Prostate gland (tissue), 2 donors: ENCODE measurements at regions of chr17 and their contacts with region 1.

Region 1: DNA sequence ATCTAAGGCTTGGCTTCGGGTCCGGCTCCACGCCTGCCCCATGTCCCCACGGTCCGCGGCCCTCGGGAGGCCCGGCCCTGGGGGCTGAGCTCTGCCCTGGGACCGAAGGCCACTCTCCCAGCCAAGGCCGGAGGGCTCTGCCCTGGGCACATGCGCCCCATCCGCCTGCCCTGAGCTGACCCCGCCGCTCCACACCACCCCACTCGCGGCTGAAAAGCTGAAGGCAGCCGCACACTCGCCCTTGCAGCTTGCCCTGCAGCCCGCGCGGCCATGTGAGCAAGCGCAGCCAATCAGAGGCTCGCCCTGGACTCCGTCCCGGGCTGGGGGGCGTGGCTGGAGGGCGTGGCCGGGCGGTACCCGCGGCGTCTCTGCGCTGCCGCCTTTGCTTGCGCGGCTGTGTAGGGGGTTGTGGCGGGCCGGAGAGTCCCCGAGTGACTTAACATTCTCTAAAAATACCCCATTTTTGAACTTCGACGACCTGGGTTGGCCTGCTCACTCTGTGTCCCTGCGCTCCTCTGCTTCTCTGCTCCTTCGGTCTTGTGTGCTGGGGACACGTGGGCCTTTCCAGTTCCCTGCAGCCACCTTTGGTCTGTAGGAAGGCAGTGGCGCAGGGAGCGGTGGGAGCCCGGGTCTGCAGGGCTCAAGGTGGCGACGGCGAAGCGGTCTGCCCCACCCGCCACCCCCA is 8.8 kb upstream of the MAP2K3 start:
- DNase-seq: peak; percentile 92
- H3K4me3 ChIP-seq: peak overlapping the region; percentile 52
- H3K27ac ChIP-seq: peak overlapping the region; percentile 25 to 60
- H3K4me1 ChIP-seq: peaks cover 5% of the 10 kb centered on the region
- H3K27me3 ChIP-seq: no peaks in the 10 kb centered on the region
- CTCF ChIP-seq: peak in 1 of 4 experiments; percentile 23
- POLR2A ChIP-seq: peak; percentile 67

Region 2: GRCh38 chr17:21214015-21214776 is 61.5 kb before region 1 on chr17 and contains the start of gene TMEM11:
- intact Hi-C with region 1: loop called (anchors 5 kb)
- DNase-seq: peak; percentile 94
- H3K4me3 ChIP-seq: peak within 1 kb of the TSS; percentile 74 to 93
- H3K27ac ChIP-seq: peak within 1 kb of the TSS; percentile 91 to 93
- H3K4me1 ChIP-seq: peaks cover 37% of the 10 kb centered on the region
- H3K27me3 ChIP-seq: no peaks in the 10 kb centered on the region
- CTCF ChIP-seq: peak in 2 of 4 experiments; percentile 15 to 26
- POLR2A ChIP-seq: peak; percentile 74
- total RNA-seq, gene TMEM11: 33.1 to 44.1 TPM

Region 3: GRCh38 chr17:21318439-21318838 is 42.7 kb after region 1 on chr17:
- intact Hi-C with region 1: no loop called
- DNase-seq: no peak
- H3K4me3 ChIP-seq: no peak overlapping the region
- H3K27ac ChIP-seq: no peak overlapping the region
- H3K4me1 ChIP-seq: no peaks in the 10 kb centered on the region
- H3K27me3 ChIP-seq: no peaks in the 10 kb centered on the region
- CTCF ChIP-seq: no peak
- POLR2A ChIP-seq: no peak

Region 4: GRCh38 chr17:21511363-21512198 is 235.9 kb after region 1 on chr17:
- intact Hi-C with region 1: loop called (anchors 2 kb)
- DNase-seq: peak; percentile 69
- H3K4me3 ChIP-seq: peak overlapping the region; percentile 30
- H3K27ac ChIP-seq: peak overlapping the region; percentile 10 to 47
- H3K4me1 ChIP-seq: no peaks in the 10 kb centered on the region
- H3K27me3 ChIP-seq: no peaks in the 10 kb centered on the region
- CTCF ChIP-seq: peak; percentile 67 to 71 (median 68)
- POLR2A ChIP-seq: no peak